Panc1 (cell line): ENCODE measurements at regions of chr7 and their contacts with region 1.

Region 1: DNA sequence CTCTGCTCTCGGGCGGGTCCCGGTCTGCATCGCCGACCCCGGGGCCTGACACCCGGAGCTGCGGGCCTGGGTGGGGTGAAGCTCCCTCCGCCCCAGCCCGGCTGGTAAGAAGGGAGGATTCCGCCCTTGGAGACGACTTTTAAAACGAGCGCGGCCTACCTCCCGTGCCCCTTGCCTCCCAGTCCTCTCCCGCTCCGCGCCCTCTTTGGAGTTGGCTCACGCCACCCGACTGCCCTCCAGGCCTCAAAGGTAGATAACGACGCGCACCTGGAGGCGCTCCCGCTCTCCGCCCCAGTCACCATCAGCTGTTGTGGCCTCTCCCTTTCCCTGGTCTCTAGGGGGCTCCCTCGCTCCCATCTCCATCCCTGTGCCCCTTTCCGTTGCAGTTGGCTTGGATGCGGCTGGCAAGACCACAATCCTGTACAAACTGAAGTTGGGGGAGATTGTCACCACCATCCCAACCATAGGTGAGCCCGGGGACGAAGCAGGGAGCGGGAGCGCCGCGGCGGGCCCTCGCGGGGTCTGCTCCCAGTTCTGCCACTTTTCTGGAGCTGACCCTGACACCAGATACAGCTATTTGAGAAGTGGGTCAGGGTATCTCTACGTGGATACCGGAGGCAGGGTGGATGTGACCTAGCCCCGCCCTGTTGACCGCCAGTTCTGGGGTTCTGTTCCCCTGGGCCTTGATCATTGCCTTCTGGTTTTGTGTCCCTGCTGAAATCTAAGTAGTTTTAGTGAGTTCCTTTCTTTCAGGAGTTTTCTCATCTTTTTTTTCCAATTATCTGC is 679 bp downstream of the ARF5 start:
- DNase-seq: no peak
- ATAC-seq: peak; percentile 64
- H3K4me3 ChIP-seq: peak overlapping the region; percentile 91 to 96
- H3K27ac ChIP-seq: peak overlapping the region; percentile 83
- H3K4me1 ChIP-seq: peaks cover 22% of the 10 kb centered on the region
- H3K27me3 ChIP-seq: no peaks in the 10 kb centered on the region
- CTCF ChIP-seq: peak; percentile 81

Region 2: GRCh38 chr7:127635659-127636285 is 46.9 kb after region 1 on chr7:
- CTCF ChIA-PET with region 1: no interaction called
- POLR2A ChIA-PET with region 1: interaction called, 13 read pairs
- in situ Hi-C with region 1: no loop called
- intact Hi-C with region 1: no loop called
- DNase-seq: no peak
- ATAC-seq: no peak
- H3K4me3 ChIP-seq: no peak overlapping the region
- H3K27ac ChIP-seq: no peak overlapping the region
- H3K4me1 ChIP-seq: no peaks in the 10 kb centered on the region
- H3K27me3 ChIP-seq: 0 out of 2 replicates have a peak, but pooled peaks cover 2% of the 10 kb centered on the region
- CTCF ChIP-seq: no peak